Panc1 (cell line): ENCODE measurements at regions of chr3 and their contacts with region 1.

Region 1: GRCh38 chr3:65883613-65884012 is 155.1 kb downstream of the MAGI1 start:
- DNase-seq: no peak
- ATAC-seq: no peak
- H3K4me3 ChIP-seq: no peak overlapping the region
- H3K27ac ChIP-seq: no peak overlapping the region
- H3K4me1 ChIP-seq: no peaks in the 10 kb centered on the region
- H3K27me3 ChIP-seq: no peaks in the 10 kb centered on the region
- CTCF ChIP-seq: no peak

Region 2: GRCh38 chr3:65313666-65314065 is 569.9 kb before region 1 on chr3:
- CTCF ChIA-PET with region 1: no interaction called
- POLR2A ChIA-PET with region 1: no interaction called
- in situ Hi-C with region 1: no loop called
- intact Hi-C with region 1: no loop called
- DNase-seq: no peak
- ATAC-seq: no peak
- H3K4me3 ChIP-seq: no peak overlapping the region
- H3K27ac ChIP-seq: no peak overlapping the region
- H3K4me1 ChIP-seq: no peaks in the 10 kb centered on the region
- H3K27me3 ChIP-seq: no peaks in the 10 kb centered on the region
- CTCF ChIP-seq: no peak

Region 3: GRCh38 chr3:65912647-65913046 is 29.0 kb after region 1 on chr3:
- CTCF ChIA-PET with region 1: interaction called, 3 read pairs
- POLR2A ChIA-PET with region 1: interaction called, 10 read pairs
- in situ Hi-C with region 1: no loop called
- intact Hi-C with region 1: no loop called
- DNase-seq: no peak
- ATAC-seq: no peak
- H3K4me3 ChIP-seq: no peak overlapping the region
- H3K27ac ChIP-seq: no peak overlapping the region
- H3K4me1 ChIP-seq: no peaks in the 10 kb centered on the region
- H3K27me3 ChIP-seq: no peaks in the 10 kb centered on the region
- CTCF ChIP-seq: no peak